CD8-positive, alpha-beta T cell (primary cell): ENCODE measurements at regions of chr2 and their contacts with region 1.

Region 1: GRCh38 chr2:25252281-25253105 is 84.1 kb upstream of the POMC start:
- DNase-seq: peak in 8 of 9 experiments; percentile 39 to 76 (median 65)
- ATAC-seq: peak; percentile 52
- H3K4me3 ChIP-seq: peak overlapping the region; percentile 43 to 59
- H3K4me3 Mint-ChIP-seq: peak overlapping the region; percentile 82
- H3K27ac ChIP-seq: peak overlapping the region in 1 of 2 experiments; percentile 31
- H3K27ac Mint-ChIP-seq: peak overlapping the region; percentile 89
- H3K4me1 ChIP-seq: peaks cover 30% of the 10 kb centered on the region
- H3K4me1 Mint-ChIP-seq: peaks cover 35% of the 10 kb centered on the region
- H3K27me3 ChIP-seq: no peaks in the 10 kb centered on the region
- H3K27me3 Mint-ChIP-seq: no peaks in the 10 kb centered on the region
- CTCF ChIP-seq: no peak

Region 2: GRCh38 chr2:25215948-25216679 is 36.4 kb before region 1 on chr2:
- CTCF ChIA-PET with region 1: no interaction called
- POLR2A ChIA-PET with region 1: interaction called, 4 read pairs
- intact Hi-C with region 1: loop called in 1 of 2 experiments (anchors 5 kb)
- DNase-seq: peak; percentile 64 to 96 (median 88)
- ATAC-seq: peak; percentile 95
- H3K4me3 ChIP-seq: peak overlapping the region; percentile 59 to 72
- H3K4me3 Mint-ChIP-seq: peak overlapping the region; percentile 77
- H3K27ac ChIP-seq: peak overlapping the region; percentile 68 to 72
- H3K27ac Mint-ChIP-seq: peak overlapping the region; percentile 80
- H3K4me1 ChIP-seq: peaks cover 7% of the 10 kb centered on the region
- H3K4me1 Mint-ChIP-seq: peaks cover 10% of the 10 kb centered on the region
- H3K27me3 ChIP-seq: no peaks in the 10 kb centered on the region
- H3K27me3 Mint-ChIP-seq: no peaks in the 10 kb centered on the region
- CTCF ChIP-seq: no peak

Region 3: GRCh38 chr2:25286025-25286400 is 33.5 kb after region 1 on chr2:
- CTCF ChIA-PET with region 1: interaction called, 3 read pairs
- POLR2A ChIA-PET with region 1: interaction called, 10 read pairs
- intact Hi-C with region 1: no loop called
- DNase-seq: peak; percentile 45 to 88 (median 77)
- ATAC-seq: peak; percentile 99
- H3K4me3 ChIP-seq: peak overlapping the region; percentile 4 to 25
- H3K4me3 Mint-ChIP-seq: peak overlapping the region; percentile 60
- H3K27ac ChIP-seq: peak overlapping the region; percentile 72 to 78
- H3K27ac Mint-ChIP-seq: peak overlapping the region; percentile 98
- H3K4me1 ChIP-seq: peaks cover 70% of the 10 kb centered on the region
- H3K4me1 Mint-ChIP-seq: peaks cover 66% of the 10 kb centered on the region
- H3K27me3 ChIP-seq: no peaks in the 10 kb centered on the region
- H3K27me3 Mint-ChIP-seq: no peaks in the 10 kb centered on the region
- CTCF ChIP-seq: no peak

Region 4: DNA sequence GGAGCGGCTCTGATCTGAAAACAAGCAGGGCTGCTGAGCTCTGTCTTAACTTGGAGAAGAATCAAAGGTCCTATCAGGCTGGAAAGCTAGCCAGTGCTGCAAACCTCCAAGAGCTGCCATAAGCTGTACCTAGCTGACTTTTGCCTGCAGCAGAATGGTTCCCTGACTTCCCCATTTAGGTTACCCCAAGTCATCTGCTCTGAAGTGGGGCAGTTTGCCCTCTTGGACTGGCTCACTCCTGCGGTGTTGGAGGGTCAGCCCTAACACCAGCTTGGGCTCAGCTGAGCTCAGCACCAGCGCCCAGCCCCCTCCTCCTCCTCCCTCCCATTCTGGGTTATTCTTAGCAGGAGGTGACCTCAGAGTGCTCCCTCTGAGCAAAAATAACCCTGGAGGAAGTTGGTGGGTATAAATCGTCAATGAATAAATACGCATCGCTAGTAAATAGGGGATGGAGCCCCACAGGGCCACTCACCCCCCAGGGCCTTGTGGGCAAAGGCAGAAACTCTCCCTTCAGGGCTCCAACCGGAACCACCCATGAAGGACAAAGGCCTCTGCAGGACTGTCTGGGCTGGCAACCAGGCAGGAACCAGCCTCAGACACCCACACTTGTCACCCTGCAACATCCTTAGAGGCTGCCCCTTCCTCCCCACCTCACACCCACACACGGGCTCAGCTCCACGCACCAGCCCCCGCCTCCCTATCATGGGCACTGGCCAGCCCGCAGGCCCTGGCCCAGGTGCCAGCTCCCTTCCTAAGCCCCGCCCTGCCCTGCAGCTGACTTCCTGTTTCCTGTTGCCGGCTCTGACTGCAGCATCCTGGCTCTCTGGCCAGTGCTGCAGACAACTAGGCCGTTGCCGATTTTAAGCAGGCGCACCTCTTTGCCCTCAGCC is 42.3 kb after region 1 on chr2:
- CTCF ChIA-PET with region 1: no interaction called
- POLR2A ChIA-PET with region 1: interaction called, 9 read pairs
- intact Hi-C with region 1: loop called in 1 of 2 experiments (anchors 5 kb)
- DNase-seq: peak; percentile 49 to 91 (median 85)
- ATAC-seq: peak; percentile 81
- H3K4me3 ChIP-seq: peak overlapping the region; percentile 18 to 46
- H3K4me3 Mint-ChIP-seq: peak overlapping the region; percentile 79
- H3K27ac ChIP-seq: peak overlapping the region; percentile 70 to 80
- H3K27ac Mint-ChIP-seq: peak overlapping the region; percentile 97
- H3K4me1 ChIP-seq: peaks cover 72% of the 10 kb centered on the region
- H3K4me1 Mint-ChIP-seq: peaks cover 59% of the 10 kb centered on the region
- H3K27me3 ChIP-seq: no peaks in the 10 kb centered on the region
- H3K27me3 Mint-ChIP-seq: no peaks in the 10 kb centered on the region
- CTCF ChIP-seq: no peak

Region 5: GRCh38 chr2:25342372-25343186 is 90.1 kb after region 1 on chr2:
- CTCF ChIA-PET with region 1: no interaction called
- POLR2A ChIA-PET with region 1: interaction called, 3 read pairs
- intact Hi-C with region 1: loop called in 1 of 2 experiments (anchors 2 kb)
- DNase-seq: peak; percentile 62 to 91 (median 80)
- ATAC-seq: peak; percentile 85
- H3K4me3 ChIP-seq: peak overlapping the region; percentile 22 to 53
- H3K4me3 Mint-ChIP-seq: peak overlapping the region; percentile 85
- H3K27ac ChIP-seq: no peak overlapping the region
- H3K27ac Mint-ChIP-seq: peak overlapping the region; percentile 77
- H3K4me1 ChIP-seq: peaks cover 42% of the 10 kb centered on the region
- H3K4me1 Mint-ChIP-seq: peaks cover 33% of the 10 kb centered on the region
- H3K27me3 ChIP-seq: no peaks in the 10 kb centered on the region
- H3K27me3 Mint-ChIP-seq: no peaks in the 10 kb centered on the region
- CTCF ChIP-seq: peak; percentile 87

Region 6: GRCh38 chr2:25521665-25522387 is 269.3 kb after region 1 on chr2:
- CTCF ChIA-PET with region 1: no interaction called
- POLR2A ChIA-PET with region 1: no interaction called
- intact Hi-C with region 1: loop called in 1 of 2 experiments (anchors 1 kb)
- DNase-seq: peak in 7 of 9 experiments; percentile 3 to 88 (median 25)
- ATAC-seq: peak; percentile 100
- H3K4me3 ChIP-seq: no peak overlapping the region
- H3K4me3 Mint-ChIP-seq: peak overlapping the region; percentile 30
- H3K27ac ChIP-seq: peak overlapping the region in 1 of 2 experiments; percentile 51
- H3K27ac Mint-ChIP-seq: peak overlapping the region; percentile 46
- H3K4me1 ChIP-seq: peaks cover 4% of the 10 kb centered on the region
- H3K4me1 Mint-ChIP-seq: peaks cover 7% of the 10 kb centered on the region
- H3K27me3 ChIP-seq: no peaks in the 10 kb centered on the region
- H3K27me3 Mint-ChIP-seq: no peaks in the 10 kb centered on the region
- CTCF ChIP-seq: peak; percentile 78